ENCODE measurements at regions of chr15 and their contacts with region 1.

Region 1: GRCh38 chr15:98177924-98178592 is 217.6 kb downstream of the ARRDC4 start:
- DNase-seq: peak; percentile 68
- H3K4me3 Mint-ChIP-seq: no peak overlapping the region
- H3K27ac Mint-ChIP-seq: no peak overlapping the region
- H3K4me1 Mint-ChIP-seq: no peaks in the 10 kb centered on the region
- H3K27me3 Mint-ChIP-seq: peaks cover 84% of the 10 kb centered on the region
- CTCF ChIP-seq: peak; percentile 32

Region 2: DNA sequence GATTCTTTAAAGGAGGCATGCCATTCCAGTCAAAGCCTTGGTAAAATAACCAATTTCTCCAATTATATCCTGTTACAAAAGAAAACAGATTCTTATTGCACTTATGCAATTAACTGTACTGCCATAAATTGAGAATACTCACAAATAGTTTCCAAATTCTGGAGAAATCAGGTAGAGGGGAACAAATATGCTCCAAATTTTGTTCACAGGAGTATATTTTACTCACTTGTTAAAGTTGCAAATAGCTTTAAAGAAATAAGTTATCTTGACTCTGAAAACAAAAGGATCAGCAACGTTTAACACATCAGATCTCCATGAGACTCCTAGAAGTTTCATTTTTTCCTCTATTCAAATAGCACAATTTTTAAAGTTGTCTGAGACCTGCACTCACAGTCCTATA is 929.7 kb before region 1 on chr15:
- CTCF ChIA-PET with region 1: interaction called, 3 read pairs
- intact Hi-C with region 1: loop called (anchors 2 kb)
- DNase-seq: no peak
- H3K4me3 Mint-ChIP-seq: no peak overlapping the region
- H3K27ac Mint-ChIP-seq: no peak overlapping the region
- H3K4me1 Mint-ChIP-seq: peaks cover 11% of the 10 kb centered on the region
- H3K27me3 Mint-ChIP-seq: no peaks in the 10 kb centered on the region
- CTCF ChIP-seq: no peak

Region 3: GRCh38 chr15:97783240-97783639 is 394.8 kb before region 1 on chr15:
- CTCF ChIA-PET with region 1: no interaction called
- intact Hi-C with region 1: loop called (anchors 10 kb)
- DNase-seq: no peak
- H3K4me3 Mint-ChIP-seq: no peak overlapping the region
- H3K27ac Mint-ChIP-seq: no peak overlapping the region
- H3K4me1 Mint-ChIP-seq: no peaks in the 10 kb centered on the region
- H3K27me3 Mint-ChIP-seq: no peaks in the 10 kb centered on the region
- CTCF ChIP-seq: no peak

Region 4: DNA sequence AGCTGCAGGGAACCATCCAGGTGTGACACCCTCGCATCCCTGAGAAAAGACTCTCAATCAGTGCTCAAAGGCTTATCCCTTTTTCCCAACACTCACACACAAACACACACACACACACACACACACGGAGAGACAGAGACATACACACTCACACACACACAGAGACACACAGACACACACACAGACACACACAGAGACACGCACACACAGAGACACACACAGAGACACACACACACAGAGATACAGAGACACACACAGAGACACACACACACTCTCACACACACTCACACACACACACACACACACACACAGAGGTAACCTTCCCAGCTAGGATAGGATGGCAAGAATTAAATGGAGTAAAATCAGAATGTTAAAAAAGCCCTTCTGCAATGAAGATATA is 280.6 kb before region 1 on chr15:
- CTCF ChIA-PET with region 1: interaction called, 20 read pairs
- intact Hi-C with region 1: no loop called
- DNase-seq: no peak
- H3K4me3 Mint-ChIP-seq: no peak overlapping the region
- H3K27ac Mint-ChIP-seq: no peak overlapping the region
- H3K4me1 Mint-ChIP-seq: no peaks in the 10 kb centered on the region
- H3K27me3 Mint-ChIP-seq: peaks cover 12% of the 10 kb centered on the region
- CTCF ChIP-seq: no peak

Region 5: GRCh38 chr15:97903971-97904572 is 274.0 kb before region 1 on chr15:
- CTCF ChIA-PET with region 1: interaction called, 20 read pairs
- intact Hi-C with region 1: loop called (anchors 1 kb)
- DNase-seq: peak; percentile 89
- H3K4me3 Mint-ChIP-seq: no peak overlapping the region
- H3K27ac Mint-ChIP-seq: no peak overlapping the region
- H3K4me1 Mint-ChIP-seq: no peaks in the 10 kb centered on the region
- H3K27me3 Mint-ChIP-seq: peaks cover 74% of the 10 kb centered on the region
- CTCF ChIP-seq: peak; percentile 64

Region 6: DNA sequence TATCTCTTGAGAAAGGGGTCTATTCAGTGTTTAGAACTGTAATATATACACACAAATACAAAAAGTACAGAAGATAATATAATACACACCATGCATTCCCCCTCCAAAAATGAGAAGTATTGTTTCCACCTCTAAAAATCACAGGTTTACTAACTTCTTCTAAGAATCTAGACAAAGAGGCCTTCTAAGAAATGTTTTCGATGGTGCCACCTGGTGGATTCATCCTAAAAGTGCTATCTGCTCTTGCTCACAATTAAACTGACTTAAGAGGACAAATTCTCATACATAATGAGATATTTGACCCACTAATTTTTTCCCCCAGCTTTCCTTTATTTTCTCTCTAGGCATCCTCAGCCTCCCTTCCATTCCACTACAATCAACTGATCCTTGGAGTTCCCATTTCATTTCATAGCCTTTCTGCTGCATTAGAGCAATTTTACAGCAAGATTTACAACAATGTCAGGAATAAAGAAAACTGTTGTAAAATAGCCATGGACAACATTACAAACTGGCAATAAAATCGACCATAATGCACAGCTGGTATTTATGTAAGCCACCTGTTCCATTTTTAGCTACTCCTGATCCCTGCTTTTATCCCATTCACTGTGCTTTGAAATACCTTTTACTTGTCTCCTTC is 92.9 kb before region 1 on chr15:
- CTCF ChIA-PET with region 1: interaction called, 3 read pairs
- intact Hi-C with region 1: loop called (anchors 5 kb)
- DNase-seq: peak; percentile 61
- H3K4me3 Mint-ChIP-seq: no peak overlapping the region
- H3K27ac Mint-ChIP-seq: no peak overlapping the region
- H3K4me1 Mint-ChIP-seq: no peaks in the 10 kb centered on the region
- H3K27me3 Mint-ChIP-seq: no peaks in the 10 kb centered on the region
- CTCF ChIP-seq: peak; percentile 35

Region 7: DNA sequence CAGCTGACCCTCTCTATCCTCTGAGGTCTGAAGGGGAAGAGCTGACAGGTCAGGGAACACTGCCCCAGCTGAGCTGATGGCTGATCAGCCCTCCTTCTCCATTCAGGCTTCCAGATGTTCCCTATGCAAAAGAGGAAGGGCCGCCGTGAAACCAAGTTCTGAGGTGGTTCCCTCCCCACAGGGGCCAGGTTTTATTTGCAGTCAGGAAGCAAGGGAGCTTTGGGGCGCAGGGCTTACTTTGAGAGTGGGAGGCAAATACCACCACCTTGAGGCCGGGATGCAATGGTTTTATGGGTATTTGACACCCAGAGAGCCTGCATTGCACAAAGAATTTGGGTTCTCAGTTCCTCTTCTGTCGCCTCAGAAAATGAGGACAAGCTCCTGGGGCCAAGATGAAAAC is 30.6 kb before region 1 on chr15:
- CTCF ChIA-PET with region 1: no interaction called
- intact Hi-C with region 1: no loop called
- DNase-seq: no peak
- H3K4me3 Mint-ChIP-seq: no peak overlapping the region
- H3K27ac Mint-ChIP-seq: no peak overlapping the region
- H3K4me1 Mint-ChIP-seq: no peaks in the 10 kb centered on the region
- H3K27me3 Mint-ChIP-seq: peaks cover 9% of the 10 kb centered on the region
- CTCF ChIP-seq: no peak

Region 8: GRCh38 chr15:98272625-98273024 is 94.6 kb after region 1 on chr15:
- CTCF ChIA-PET with region 1: no interaction called
- intact Hi-C with region 1: no loop called
- DNase-seq: no peak
- H3K4me3 Mint-ChIP-seq: no peak overlapping the region
- H3K27ac Mint-ChIP-seq: no peak overlapping the region
- H3K4me1 Mint-ChIP-seq: no peaks in the 10 kb centered on the region
- H3K27me3 Mint-ChIP-seq: no peaks in the 10 kb centered on the region
- CTCF ChIP-seq: no peak

Region 9: DNA sequence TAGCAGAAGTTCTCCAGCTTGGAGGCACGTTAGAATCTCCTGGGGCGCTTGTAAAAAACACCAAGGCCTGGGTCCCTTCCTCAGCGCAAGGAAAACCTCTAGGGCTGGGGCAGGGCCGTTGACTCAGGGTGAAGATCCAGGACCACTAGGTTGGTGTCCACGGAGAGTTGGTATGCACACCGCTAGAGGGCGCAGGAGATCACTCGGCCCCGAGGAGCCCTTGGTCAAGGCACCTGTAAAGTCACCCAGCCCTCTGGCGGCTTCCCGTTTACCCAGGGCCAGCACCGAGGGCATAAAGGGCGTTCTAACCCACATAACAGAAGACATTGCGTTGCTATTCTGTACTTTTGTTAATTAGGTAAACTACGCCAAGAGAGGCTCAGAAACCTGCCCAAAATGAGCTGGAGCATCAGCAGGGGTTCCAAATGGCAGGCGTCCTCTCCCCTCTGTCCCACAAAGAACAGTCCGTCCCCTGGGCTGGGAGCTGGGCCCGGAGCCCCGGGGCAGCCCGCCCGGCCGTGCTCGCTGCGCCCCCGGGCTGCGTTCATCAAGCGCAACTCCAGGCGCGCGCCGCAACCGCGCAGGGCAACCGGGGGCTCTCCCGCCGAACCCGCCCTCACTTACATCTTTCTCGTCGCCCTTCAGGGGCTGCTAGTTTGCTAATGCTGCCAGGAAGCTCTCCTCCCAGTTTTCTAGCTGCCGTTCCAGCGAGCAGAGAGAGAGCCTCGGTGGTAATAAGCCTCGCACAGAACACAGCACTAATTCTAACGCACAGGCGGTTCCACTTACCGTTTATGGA is 114.6 kb after region 1 on chr15:
- CTCF ChIA-PET with region 1: no interaction called
- intact Hi-C with region 1: loop called (anchors 5 kb)
- DNase-seq: peak; percentile 72
- H3K4me3 Mint-ChIP-seq: no peak overlapping the region
- H3K27ac Mint-ChIP-seq: no peak overlapping the region
- H3K4me1 Mint-ChIP-seq: no peaks in the 10 kb centered on the region
- H3K27me3 Mint-ChIP-seq: peaks cover 41% of the 10 kb centered on the region
- CTCF ChIP-seq: peak; percentile 61

Measured in Calu3 (cell line).